ENCODE measurements at regions of chr1 and their contacts with region 1.

Region 1: GRCh38 chr1:202009326-202010179 is 834 bp upstream of the ELF3 start:
- DNase-seq: peak; percentile 77
- ATAC-seq: peak; percentile 48
- H3K4me3 ChIP-seq: peak overlapping the region; percentile 90 to 93
- H3K27ac ChIP-seq: peak overlapping the region; percentile 74
- H3K4me1 ChIP-seq: peaks cover 61 to 97% of the 10 kb centered on the region in 2 experiments
- H3K27me3 ChIP-seq: no peaks in the 10 kb centered on the region
- CTCF ChIP-seq: peak in 2 of 3 experiments; percentile 89 to 96; a peak in 4 of 6 replicates
- POLR2A ChIP-seq: no peak
- RAD21 ChIP-seq: no peak

Region 2: GRCh38 chr1:201982623-201983379 is 26.8 kb before region 1 on chr1 and contains the start of gene RNPEP:
- CTCF ChIA-PET with region 1: interaction called, 5 read pairs
- POLR2A ChIA-PET with region 1: interaction called, 12 read pairs
- RAD21 ChIA-PET with region 1: no interaction called
- intact Hi-C with region 1: no loop called
- DNase-seq: peak; percentile 51
- ATAC-seq: peak; percentile 81
- H3K4me3 ChIP-seq: peak within 1 kb of the TSS; percentile 89 to 98
- H3K27ac ChIP-seq: peak within 1 kb of the TSS; percentile 90
- H3K4me1 ChIP-seq: peaks cover 5 to 23% of the 10 kb centered on the region in 2 experiments
- H3K27me3 ChIP-seq: no peaks in the 10 kb centered on the region
- CTCF ChIP-seq: 0 out of 6 replicates have a peak, but pooled peaks of 1 of the 3 experiments have one; percentile 5
- POLR2A ChIP-seq: peak; percentile 40
- RAD21 ChIP-seq: peak; percentile 15; the same call in 1 of the 2 replicates
- total RNA-seq, gene RNPEP: 85.9 TPM

Region 3: GRCh38 chr1:202034683-202035462 is 25.3 kb after region 1 on chr1:
- CTCF ChIA-PET with region 1: interaction called, 7 read pairs
- POLR2A ChIA-PET with region 1: interaction called, 45 read pairs
- RAD21 ChIA-PET with region 1: interaction called, 5 to 8 read pairs
- intact Hi-C with region 1: no loop called
- DNase-seq: peak; percentile 91
- ATAC-seq: peak; percentile 93
- H3K4me3 ChIP-seq: peak overlapping the region; percentile 20 to 44; a peak in 3 of 4 replicates
- H3K27ac ChIP-seq: peak overlapping the region; percentile 93
- H3K4me1 ChIP-seq: peaks cover 44 to 63% of the 10 kb centered on the region in 2 experiments
- H3K27me3 ChIP-seq: no peaks in the 10 kb centered on the region
- CTCF ChIP-seq: no peak
- POLR2A ChIP-seq: no peak
- RAD21 ChIP-seq: peak; percentile 24; the same call in 1 of the 2 replicates

Region 4: DNA sequence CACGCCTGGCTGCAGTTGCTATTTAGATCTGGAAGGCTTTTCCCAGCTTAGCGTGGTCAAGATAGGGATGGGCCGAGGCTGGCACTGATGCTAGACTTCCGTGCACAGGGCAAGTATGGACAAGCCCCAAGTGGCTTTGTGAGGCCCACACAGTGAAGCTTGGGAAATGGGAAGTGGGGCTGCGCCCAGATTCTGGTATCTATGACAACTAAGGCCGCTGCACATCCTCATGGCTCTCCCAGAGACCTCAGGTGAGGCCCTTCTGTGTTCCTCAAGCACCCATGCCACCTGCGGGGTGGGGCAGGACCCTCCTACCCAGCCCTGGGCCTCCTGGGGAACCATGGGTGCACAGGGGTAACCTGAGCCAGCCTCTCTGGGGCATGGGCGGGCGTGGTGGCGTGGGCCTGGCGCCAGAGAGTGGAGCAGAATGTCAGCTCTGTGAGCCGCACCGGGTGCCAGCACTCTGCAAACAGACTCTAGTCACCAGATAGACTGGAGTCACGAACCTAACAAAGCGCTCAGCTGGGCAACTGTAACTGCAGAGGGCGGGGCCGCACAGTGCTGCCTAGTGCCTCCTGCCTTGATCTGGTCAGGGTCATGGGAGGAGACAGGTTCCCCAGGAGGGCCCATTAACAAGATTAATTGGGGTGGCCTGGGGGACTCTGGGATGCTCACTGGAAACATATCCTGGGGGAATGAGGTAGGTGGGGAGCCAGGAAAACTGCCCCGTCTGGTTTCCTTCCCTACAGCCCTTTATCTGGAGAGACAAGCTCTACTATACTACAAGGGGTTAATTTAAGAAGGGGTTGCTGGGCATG is 47.3 kb after region 1 on chr1:
- CTCF ChIA-PET with region 1: interaction called, 4 read pairs
- POLR2A ChIA-PET with region 1: interaction called, 53 read pairs
- RAD21 ChIA-PET with region 1: interaction called, 4 read pairs
- intact Hi-C with region 1: loop called (anchors 2 kb)
- DNase-seq: peak; percentile 76
- ATAC-seq: peak; percentile 84
- H3K4me3 ChIP-seq: peak overlapping the region; percentile 11 to 43; a peak in 3 of 4 replicates
- H3K27ac ChIP-seq: peak overlapping the region; percentile 91
- H3K4me1 ChIP-seq: peaks cover 49 to 60% of the 10 kb centered on the region in 2 experiments
- H3K27me3 ChIP-seq: no peaks in the 10 kb centered on the region
- CTCF ChIP-seq: no peak
- POLR2A ChIP-seq: no peak
- RAD21 ChIP-seq: no peak

Region 5: DNA sequence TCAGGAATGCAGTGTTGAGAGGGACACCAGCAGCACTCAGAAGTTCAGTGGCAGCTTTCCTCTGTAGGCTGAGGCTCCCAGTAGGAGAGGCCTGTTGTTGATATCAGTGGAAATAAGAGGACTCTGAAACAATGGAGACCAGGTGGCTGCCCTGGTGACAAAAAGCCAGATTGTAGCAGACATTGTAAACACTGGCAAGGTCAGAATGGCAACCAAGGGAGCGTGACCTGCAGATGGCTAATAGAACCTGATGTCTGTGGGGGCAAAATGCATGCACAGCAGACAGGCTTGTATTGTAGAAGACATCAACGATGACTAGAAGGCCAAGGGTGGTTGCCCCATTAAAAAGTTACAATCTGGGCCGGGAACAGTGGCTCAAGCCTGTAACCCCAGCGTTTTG is 60.1 kb after region 1 on chr1:
- CTCF ChIA-PET with region 1: interaction called, 4 read pairs
- POLR2A ChIA-PET with region 1: interaction called, 20 read pairs
- RAD21 ChIA-PET with region 1: no interaction called
- intact Hi-C with region 1: no loop called
- DNase-seq: no peak
- ATAC-seq: no peak
- H3K4me3 ChIP-seq: no peak overlapping the region
- H3K27ac ChIP-seq: no peak overlapping the region
- H3K4me1 ChIP-seq: peaks cover 6 to 15% of the 10 kb centered on the region in 2 experiments; a peak in 3 of 4 replicates
- H3K27me3 ChIP-seq: no peaks in the 10 kb centered on the region
- CTCF ChIP-seq: no peak
- POLR2A ChIP-seq: no peak
- RAD21 ChIP-seq: no peak

Region 6: GRCh38 chr1:202090997-202091396 is 81.4 kb after region 1 on chr1:
- CTCF ChIA-PET with region 1: interaction called, 4 read pairs
- POLR2A ChIA-PET with region 1: interaction called, 55 read pairs
- RAD21 ChIA-PET with region 1: interaction called in 1 of 2 experiments, 5 read pairs
- intact Hi-C with region 1: loop called (anchors 1 kb)
- DNase-seq: no peak
- ATAC-seq: peak; percentile 71
- H3K4me3 ChIP-seq: no peak overlapping the region
- H3K27ac ChIP-seq: no peak overlapping the region
- H3K4me1 ChIP-seq: peaks cover 18 to 38% of the 10 kb centered on the region in 2 experiments
- H3K27me3 ChIP-seq: no peaks in the 10 kb centered on the region
- CTCF ChIP-seq: peak in 2 of 3 experiments; percentile 17 to 39; a peak in 2 of 6 replicates
- POLR2A ChIP-seq: no peak
- RAD21 ChIP-seq: no peak

Region 7: GRCh38 chr1:202112839-202113672 is 103.5 kb after region 1 on chr1:
- CTCF ChIA-PET with region 1: interaction called, 106 read pairs
- POLR2A ChIA-PET with region 1: interaction called, 72 read pairs
- RAD21 ChIA-PET with region 1: interaction called, 8 to 9 read pairs
- intact Hi-C with region 1: no loop called
- DNase-seq: no peak
- ATAC-seq: peak; percentile 41
- H3K4me3 ChIP-seq: no peak overlapping the region
- H3K27ac ChIP-seq: no peak overlapping the region
- H3K4me1 ChIP-seq: peaks cover 38 to 47% of the 10 kb centered on the region in 2 experiments
- H3K27me3 ChIP-seq: no peaks in the 10 kb centered on the region
- CTCF ChIP-seq: no peak
- POLR2A ChIP-seq: no peak
- RAD21 ChIP-seq: no peak

Region 8: DNA sequence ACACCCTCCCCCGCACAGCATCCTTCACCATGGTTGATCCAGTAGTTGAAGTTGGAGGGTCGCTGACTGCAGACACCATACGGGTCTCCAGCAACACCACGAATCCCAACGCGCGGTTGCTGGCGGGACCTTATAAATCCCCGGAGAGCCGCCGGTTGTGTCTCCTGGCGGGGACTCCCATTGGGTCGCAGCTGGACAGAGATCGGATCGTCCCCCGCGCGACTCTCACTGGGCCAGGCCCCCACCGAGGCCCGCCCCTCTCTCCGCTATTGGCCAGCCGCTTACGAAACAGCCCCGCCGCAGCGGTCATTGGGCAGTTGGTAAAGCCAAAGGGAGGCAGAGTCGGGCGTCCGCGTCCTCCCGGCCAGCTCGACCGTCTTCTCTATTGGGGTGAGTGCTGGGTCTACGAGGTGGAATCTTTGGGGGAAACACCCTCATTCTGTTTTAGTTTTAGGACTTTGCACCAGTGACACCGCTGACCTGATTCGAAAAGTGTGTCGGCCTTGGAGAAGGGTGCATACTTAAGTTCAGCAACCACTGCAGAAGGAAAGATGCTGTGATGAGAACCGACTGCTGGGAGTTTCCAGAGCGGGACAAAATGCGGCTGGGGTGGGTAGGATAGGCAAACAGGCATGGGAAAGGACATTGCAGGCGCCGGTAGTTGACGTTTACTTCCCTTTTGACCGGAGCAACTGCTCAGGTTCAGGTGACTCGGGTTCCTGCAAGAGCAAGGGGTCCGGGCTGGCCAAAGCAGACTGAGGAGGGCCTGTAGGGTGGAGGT is 852.1 kb after region 1 on chr1:
- CTCF ChIA-PET with region 1: no interaction called
- POLR2A ChIA-PET with region 1: no interaction called
- RAD21 ChIA-PET with region 1: no interaction called
- intact Hi-C with region 1: no loop called
- DNase-seq: peak; percentile 75
- ATAC-seq: peak; percentile 96
- H3K4me3 ChIP-seq: peak overlapping the region; percentile 76 to 77
- H3K27ac ChIP-seq: no peak overlapping the region; the same call in 1 of the 2 replicates
- H3K4me1 ChIP-seq: peaks cover 8 to 14% of the 10 kb centered on the region in 2 experiments; a peak in 3 of 4 replicates
- H3K27me3 ChIP-seq: 0 out of 2 replicates have a peak, but pooled peaks cover 2% of the 10 kb centered on the region
- CTCF ChIP-seq: no peak
- POLR2A ChIP-seq: peak; percentile 56
- RAD21 ChIP-seq: no peak